GM12878 (cell line): ENCODE measurements at regions of chr11 and their contacts with region 1.

Region 1: GRCh38 chr11:46826310-46827044 is 19.6 kb downstream of the CKAP5 start:
- DNase-seq: no peak
- ATAC-seq: peak; percentile 100
- H3K4me3 ChIP-seq: peak overlapping the region; percentile 67; the same call in 1 of the 2 replicates
- H3K27ac ChIP-seq: no peak overlapping the region; the same call in 1 of the 2 replicates
- H3K4me1 ChIP-seq: peaks cover 7% of the 10 kb centered on the region; the same call in 1 of the 2 replicates
- H3K27me3 ChIP-seq: no peaks in the 10 kb centered on the region
- CTCF ChIP-seq: no peak
- EP300 ChIP-seq: no peak
- POLR2A ChIP-seq: no peak
- RAD21 ChIP-seq: no peak

Region 2: DNA sequence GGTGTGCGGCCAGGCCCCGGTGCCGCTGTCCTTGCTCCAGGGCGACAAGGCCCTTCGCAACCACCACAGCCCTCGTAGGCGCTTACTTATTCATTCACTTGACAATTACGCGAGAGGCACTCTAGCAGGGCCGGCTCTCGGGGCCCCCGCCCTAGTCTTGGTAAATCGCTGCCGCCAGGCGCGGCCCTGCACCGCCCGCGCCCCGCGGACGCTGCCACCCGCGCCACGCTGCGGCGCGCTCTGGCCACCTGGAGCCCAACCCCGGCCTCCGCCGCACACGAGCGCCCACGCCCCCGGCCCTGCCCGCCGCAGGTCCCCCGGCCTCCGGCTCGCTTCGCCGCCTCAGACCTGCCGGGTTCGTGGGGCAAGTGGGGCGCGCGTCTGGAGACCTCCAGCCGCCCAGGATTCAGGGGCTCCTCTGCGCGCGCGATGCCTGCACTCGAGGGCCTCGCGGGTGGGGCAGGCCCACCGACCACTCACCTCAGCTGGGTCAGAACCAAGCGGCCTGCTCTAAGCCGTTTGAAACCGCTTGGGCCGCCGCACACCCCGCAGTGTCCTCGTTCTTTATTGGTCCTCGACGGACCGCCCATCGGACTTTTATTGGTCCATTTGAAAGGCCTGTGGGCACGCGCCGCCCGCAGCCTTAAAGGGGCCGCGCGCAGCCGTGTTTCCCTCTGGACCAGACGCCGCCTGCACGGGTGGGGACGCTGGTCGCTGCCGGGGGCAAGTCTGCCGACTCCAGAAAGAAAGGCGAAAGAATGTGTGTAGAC is 19.4 kb after region 1 on chr11 and contains the start of gene CKAP5:
- CTCF ChIA-PET with region 1: interaction called, 4 read pairs
- POLR2A ChIA-PET with region 1: interaction called, 4 read pairs
- RAD21 ChIA-PET with region 1: interaction called, 3 read pairs
- SMC1A ChIA-PET with region 1: interaction called, 6 read pairs
- in situ Hi-C with region 1: no loop called
- intact Hi-C with region 1: loop called (anchors 2 kb)
- DNase-seq: peak; percentile 56
- ATAC-seq: peak; percentile 98
- H3K4me3 ChIP-seq: peak within 1 kb of the TSS; percentile 97
- H3K27ac ChIP-seq: peak within 1 kb of the TSS; percentile 53
- H3K4me1 ChIP-seq: no peaks in the 10 kb centered on the region; the same call in 1 of the 2 replicates
- H3K27me3 ChIP-seq: no peaks in the 10 kb centered on the region
- CTCF ChIP-seq: no peak
- EP300 ChIP-seq: no peak
- POLR2A ChIP-seq: peak; percentile 90
- RAD21 ChIP-seq: no peak
- polyA plus RNA-seq, gene CKAP5: 20.1 to 37.5 TPM

Region 3: DNA sequence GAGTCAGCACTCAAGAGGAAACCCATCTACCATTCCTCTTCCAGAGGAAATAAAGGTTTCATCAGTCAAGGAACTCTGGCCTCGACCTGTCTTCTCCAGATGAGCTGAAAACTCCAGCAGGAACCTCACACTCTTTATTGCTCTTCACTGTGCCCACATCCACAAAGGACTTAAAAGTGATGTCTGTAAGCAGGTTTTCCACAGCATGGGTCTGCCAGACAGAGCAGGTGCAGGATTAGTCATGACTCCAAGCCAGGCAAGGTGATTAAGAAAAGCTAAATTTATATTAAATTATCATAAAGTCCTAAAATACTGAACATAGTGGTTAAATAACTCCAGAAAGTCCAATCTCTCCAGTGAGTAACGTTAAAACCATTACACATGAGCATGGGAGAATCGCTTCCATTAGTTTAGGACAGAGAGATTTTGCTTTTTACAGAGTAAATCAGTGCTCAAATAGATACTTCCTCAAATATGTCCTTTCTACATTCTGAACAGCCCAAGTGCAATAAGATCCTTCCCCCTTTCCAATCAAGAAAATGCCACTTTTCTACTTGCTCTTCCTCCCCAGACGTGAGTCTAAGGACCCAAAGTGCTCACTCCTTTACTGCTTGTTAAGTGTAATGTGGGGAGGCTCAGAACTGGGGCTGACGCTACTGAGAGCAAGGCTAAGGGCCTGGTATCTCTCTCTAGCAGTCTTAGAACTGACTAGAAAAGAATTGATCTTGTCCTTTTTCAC is 30.3 kb after region 1 on chr11:
- CTCF ChIA-PET with region 1: no interaction called
- POLR2A ChIA-PET with region 1: interaction called, 10 read pairs
- RAD21 ChIA-PET with region 1: no interaction called
- SMC1A ChIA-PET with region 1: no interaction called
- in situ Hi-C with region 1: no loop called
- intact Hi-C with region 1: no loop called
- DNase-seq: no peak
- ATAC-seq: no peak
- H3K4me3 ChIP-seq: no peak overlapping the region
- H3K27ac ChIP-seq: no peak overlapping the region
- H3K4me1 ChIP-seq: no peaks in the 10 kb centered on the region
- H3K27me3 ChIP-seq: no peaks in the 10 kb centered on the region; a peak in 1 of 4 replicates
- CTCF ChIP-seq: no peak
- EP300 ChIP-seq: no peak
- POLR2A ChIP-seq: no peak
- RAD21 ChIP-seq: no peak